Astrocyte of the cerebellum (primary cell): ENCODE measurements at regions of chr18 and their contacts with region 1.

Region 1: GRCh38 chr18:78123144-78123909 is 856.3 kb upstream of the SALL3 start:
- DNase-seq: no peak
- H3K4me3 ChIP-seq: no peak overlapping the region
- CTCF ChIP-seq: no peak

Region 2: DNA sequence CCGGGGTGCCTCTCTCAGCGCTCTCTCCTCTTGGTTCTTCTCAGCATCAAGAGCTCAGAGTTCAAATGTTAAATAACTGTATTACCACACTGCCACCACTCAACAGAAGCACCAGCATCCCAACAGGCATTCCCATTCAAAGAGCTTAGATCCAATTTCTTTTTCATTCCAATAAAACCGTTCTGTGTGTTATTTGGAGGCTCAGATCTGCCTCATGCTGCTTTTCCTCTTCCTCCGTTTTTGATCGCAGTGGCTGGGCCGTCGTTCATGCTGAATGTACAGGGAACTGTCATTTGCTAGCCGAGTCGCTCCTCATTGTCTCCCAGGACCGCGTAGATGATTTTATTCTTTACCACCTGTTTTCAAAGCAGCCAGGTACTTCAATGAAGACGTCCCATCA is 57.4 kb after region 1 on chr18:
- in situ Hi-C with region 1: no loop called
- DNase-seq: no peak
- H3K4me3 ChIP-seq: no peak overlapping the region
- CTCF ChIP-seq: no peak

Region 3: GRCh38 chr18:78221496-78221895 is 98.2 kb after region 1 on chr18:
- in situ Hi-C with region 1: loop called (anchors 5 kb)
- DNase-seq: no peak
- H3K4me3 ChIP-seq: no peak overlapping the region
- CTCF ChIP-seq: no peak